Activated CD4-positive, alpha-beta T cell treated with anti-CD3 and anti-CD28 coated beads for 36 hours (primary cell): ENCODE measurements at regions of chr1 and their contacts with region 1.

Region 1: DNA sequence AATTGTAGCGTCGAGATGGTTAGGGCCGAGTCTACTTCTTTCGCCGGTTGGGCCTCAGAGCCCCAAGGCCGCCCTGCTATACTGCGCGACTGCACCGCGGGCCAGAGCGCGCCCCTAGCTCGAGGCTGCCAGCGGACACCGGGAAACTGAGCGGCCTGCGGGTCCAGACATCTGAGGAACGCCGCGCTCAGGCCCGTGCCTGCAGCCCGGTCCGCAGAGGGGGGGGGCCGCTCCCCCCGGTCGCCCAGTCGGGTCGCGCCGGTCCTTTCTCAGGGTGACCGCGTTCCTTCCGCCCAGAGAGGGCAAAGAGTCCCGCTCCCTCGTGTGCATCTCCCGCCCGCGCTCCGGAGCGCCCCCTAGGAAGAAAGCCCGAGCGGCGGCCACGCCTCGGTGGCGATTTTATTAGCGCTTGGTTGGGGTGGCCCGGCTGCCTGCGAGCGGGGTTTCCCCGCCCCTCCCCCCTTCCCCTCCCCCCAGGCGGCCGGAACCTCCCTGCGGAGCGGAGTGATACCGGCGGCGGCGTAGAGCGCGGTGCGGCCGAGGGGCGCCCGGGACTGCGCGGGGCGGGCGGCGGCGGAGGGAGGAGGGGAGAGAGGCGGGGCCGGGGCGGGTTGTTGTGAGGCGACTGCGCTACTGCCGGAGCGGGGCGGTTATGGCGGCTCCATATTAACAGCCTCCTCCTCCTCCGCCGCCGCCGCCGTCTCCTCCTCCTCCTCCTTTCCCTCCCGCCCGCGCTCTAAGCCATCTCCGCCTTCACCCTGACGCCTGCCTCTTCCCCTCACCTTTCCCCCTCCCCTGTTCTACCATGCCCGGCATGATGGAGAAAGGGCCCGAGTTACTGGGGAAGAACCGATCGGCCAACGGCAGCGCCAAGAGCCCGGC is at the start of gene RCOR3:
- DNase-seq: peak; percentile 97
- ATAC-seq: peak; percentile 83
- H3K4me3 Mint-ChIP-seq: peak within 1 kb of the TSS; percentile 90
- H3K27ac Mint-ChIP-seq: peak within 1 kb of the TSS; percentile 96
- H3K4me1 Mint-ChIP-seq: peaks cover 13% of the 10 kb centered on the region
- H3K27me3 Mint-ChIP-seq: no peaks in the 10 kb centered on the region
- total RNA-seq, gene RCOR3: 31.0 to 33.4 TPM

Region 2: GRCh38 chr1:210373885-210374599 is 885.0 kb before region 1 on chr1:
- CTCF ChIA-PET with region 1: no interaction called
- POLR2A ChIA-PET with region 1: interaction called, 4 read pairs
- intact Hi-C with region 1: loop called in 1 of 2 experiments (anchors 2 kb)
- DNase-seq: peak; percentile 90
- ATAC-seq: peak; percentile 82
- H3K4me3 Mint-ChIP-seq: no peak overlapping the region
- H3K27ac Mint-ChIP-seq: peak overlapping the region; percentile 82
- H3K4me1 Mint-ChIP-seq: peaks cover 27% of the 10 kb centered on the region
- H3K27me3 Mint-ChIP-seq: no peaks in the 10 kb centered on the region

Region 3: DNA sequence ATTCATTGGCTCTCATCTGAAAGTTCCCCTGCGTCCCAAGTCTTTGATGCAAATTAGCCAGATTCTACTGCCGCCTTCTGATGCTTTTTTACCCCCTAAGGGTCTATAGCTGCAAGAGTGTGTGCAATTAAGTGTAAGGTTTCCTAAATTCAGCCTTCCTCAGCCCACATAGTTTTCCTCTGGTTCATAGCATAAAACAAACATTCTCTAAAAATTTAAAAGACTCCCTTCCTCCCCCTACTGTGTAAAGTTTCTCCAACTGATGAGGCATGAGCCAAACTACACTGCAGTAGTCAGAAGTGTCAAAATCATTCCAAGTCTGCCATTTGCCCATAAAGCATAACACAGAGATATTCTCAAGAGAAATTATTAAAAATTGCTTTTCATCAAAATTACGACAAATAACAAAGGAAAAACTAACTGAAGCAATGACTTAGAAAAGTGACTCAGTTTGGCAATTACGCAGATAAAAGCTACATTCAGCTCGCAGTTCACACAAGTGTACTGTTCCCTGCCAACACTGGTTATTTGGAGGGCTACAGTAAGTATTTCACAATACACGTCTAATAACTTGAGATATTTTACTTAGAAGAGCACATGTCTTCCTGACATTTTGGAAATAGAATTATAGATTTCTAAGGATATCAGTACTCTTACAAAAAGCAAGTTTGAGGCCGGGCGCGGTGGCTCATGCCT is 140.4 kb before region 1 on chr1:
- CTCF ChIA-PET with region 1: no interaction called
- POLR2A ChIA-PET with region 1: no interaction called
- intact Hi-C with region 1: no loop called
- DNase-seq: no peak
- ATAC-seq: no peak
- H3K4me3 Mint-ChIP-seq: no peak overlapping the region
- H3K27ac Mint-ChIP-seq: no peak overlapping the region
- H3K4me1 Mint-ChIP-seq: no peaks in the 10 kb centered on the region
- H3K27me3 Mint-ChIP-seq: peaks cover 28% of the 10 kb centered on the region

Region 4: DNA sequence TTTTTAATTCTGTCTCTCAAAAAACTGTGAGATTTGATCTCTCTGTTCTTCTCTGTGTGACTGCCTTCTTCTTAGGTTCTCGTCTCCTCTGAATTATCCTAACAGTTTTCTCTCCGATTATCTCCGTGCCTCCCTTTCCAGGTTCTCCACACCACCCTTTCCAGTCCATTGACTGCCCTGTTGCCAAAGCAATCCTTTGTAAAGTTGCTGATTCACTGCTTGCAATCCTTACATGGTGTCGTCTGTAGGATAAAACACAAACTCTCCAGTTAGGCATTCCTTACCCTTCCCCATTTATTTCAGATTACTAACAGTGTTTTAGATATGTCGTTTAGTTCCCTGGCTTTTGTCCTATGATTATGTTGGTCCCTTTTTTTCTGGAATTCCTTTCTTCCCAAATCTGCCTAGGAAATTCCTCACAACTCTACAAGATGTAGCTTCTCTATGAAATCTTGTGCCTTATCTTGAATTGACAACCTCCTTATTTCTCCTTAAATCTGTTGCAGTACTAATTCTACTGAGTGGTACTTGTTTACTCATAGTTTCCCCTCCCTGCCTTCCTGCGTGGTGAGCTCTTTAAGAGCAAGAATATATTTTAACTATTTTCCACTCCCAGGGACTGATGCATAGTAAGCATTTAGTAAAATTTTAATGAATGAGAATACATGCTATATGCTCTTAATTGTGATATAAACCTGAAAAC is 22.5 kb after region 1 on chr1:
- CTCF ChIA-PET with region 1: interaction called, 10 read pairs
- POLR2A ChIA-PET with region 1: interaction called, 3 read pairs
- intact Hi-C with region 1: loop called in 1 of 2 experiments (anchors 1 kb)
- DNase-seq: peak; percentile 24
- ATAC-seq: peak; percentile 47
- H3K4me3 Mint-ChIP-seq: no peak overlapping the region
- H3K27ac Mint-ChIP-seq: no peak overlapping the region
- H3K4me1 Mint-ChIP-seq: peaks cover 3% of the 10 kb centered on the region
- H3K27me3 Mint-ChIP-seq: no peaks in the 10 kb centered on the region

Region 5: DNA sequence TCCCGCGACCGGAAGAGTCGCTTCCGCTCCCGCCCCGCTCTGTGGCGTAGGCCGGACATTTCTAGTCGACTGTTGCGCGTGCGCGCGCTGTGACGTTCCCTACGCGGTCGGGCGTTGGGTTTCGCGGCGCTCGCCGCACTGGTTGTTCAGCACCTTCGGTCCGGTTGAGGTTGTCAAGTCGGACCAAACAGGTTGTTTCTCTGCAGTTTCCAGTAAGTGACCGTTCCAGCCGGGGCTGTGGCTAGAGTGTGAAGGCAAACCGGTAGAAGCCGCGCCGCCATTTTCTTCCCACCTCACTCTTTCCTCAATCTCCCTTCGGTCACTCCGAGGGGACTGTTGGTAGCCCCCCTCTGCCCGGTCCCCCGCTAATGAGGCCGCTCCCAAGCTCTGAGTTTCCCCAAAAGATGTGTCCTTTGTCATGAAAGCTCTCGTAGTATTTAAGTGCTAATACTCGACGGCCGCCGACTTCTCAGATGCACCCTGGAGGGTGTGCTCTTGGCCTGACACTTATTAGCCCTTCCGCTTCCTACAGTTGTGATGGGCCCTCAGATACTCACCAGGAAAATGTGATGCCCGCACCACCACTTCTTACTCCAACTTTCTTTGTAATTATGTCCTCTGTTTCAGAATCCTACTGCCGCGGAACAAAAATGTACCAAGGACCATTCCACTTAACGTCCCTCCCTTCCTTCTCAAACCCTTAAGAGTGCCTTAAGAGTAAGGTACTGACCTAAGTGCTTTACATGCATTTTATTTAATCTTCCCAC is 123.9 kb after region 1 on chr1:
- CTCF ChIA-PET with region 1: interaction called, 3 read pairs
- POLR2A ChIA-PET with region 1: interaction called, 3 read pairs
- intact Hi-C with region 1: loop called in 1 of 2 experiments (anchors 1 kb)
- DNase-seq: peak; percentile 86
- ATAC-seq: peak; percentile 72
- H3K4me3 Mint-ChIP-seq: peak overlapping the region; percentile 88
- H3K27ac Mint-ChIP-seq: peak overlapping the region; percentile 98
- H3K4me1 Mint-ChIP-seq: peaks cover 47% of the 10 kb centered on the region
- H3K27me3 Mint-ChIP-seq: no peaks in the 10 kb centered on the region

Region 6: GRCh38 chr1:212414328-212415106 is 1155.5 kb after region 1 on chr1 and contains the start of gene PACC1:
- CTCF ChIA-PET with region 1: no interaction called
- POLR2A ChIA-PET with region 1: no interaction called
- intact Hi-C with region 1: loop called in 1 of 2 experiments (anchors 10 kb)
- DNase-seq: peak; percentile 93
- ATAC-seq: peak; percentile 98
- H3K4me3 Mint-ChIP-seq: peak within 1 kb of the TSS; percentile 93
- H3K27ac Mint-ChIP-seq: peak within 1 kb of the TSS; percentile 92
- H3K4me1 Mint-ChIP-seq: peaks cover 22% of the 10 kb centered on the region
- H3K27me3 Mint-ChIP-seq: no peaks in the 10 kb centered on the region
- total RNA-seq, gene PACC1: 9.2 to 13.8 TPM